Calu3 (cell line): ENCODE measurements at regions of chr1 and their contacts with region 1.

Region 1: DNA sequence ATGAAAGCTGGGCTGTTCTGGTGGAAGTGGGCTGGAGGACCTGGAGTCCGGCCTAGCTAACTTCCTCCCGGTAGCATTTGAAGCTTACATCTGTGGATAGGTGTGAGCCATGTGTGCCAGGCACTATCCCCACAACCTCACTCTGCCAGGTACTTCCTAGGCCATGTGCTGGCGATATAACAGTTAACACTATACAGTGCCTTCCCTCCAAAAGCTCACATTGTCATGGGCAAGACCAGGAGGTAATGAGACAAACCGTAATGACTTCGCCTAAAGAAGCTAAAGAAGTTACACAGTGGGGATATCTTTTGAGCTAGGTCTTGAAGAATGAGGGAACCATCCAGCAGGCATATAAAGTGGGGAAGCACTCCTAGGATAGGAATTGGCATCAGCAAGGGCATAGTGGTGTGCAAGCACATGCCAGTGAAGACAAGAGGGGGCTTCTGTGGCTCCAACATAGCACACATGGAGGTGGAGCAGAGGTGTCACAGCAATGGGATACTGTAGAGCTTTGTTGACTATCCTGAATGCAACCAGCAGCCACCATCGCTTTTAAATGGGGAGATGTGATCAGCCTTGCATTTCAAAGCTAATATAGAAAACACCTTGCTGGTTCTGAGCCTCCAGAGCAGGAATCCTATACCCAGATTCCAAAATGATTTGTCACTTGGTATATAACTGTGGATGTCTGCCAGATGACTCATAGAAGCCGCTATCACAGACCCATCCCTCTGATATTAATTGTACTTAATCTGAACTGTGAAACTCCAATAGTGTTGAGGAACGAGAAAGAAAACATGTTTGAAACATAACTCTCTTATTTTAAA is 466.3 kb downstream of the LMO4 start:
- DNase-seq: peak; percentile 55
- H3K4me3 Mint-ChIP-seq: peak overlapping the region; percentile 38
- H3K27ac Mint-ChIP-seq: peak overlapping the region; percentile 85
- H3K4me1 Mint-ChIP-seq: peaks cover 88% of the 10 kb centered on the region
- H3K27me3 Mint-ChIP-seq: no peaks in the 10 kb centered on the region
- CTCF ChIP-seq: no peak

Region 2: GRCh38 chr1:87328272-87329050 is 466.5 kb before region 1 on chr1 and contains the start of gene LMO4:
- CTCF ChIA-PET with region 1: interaction called, 3 read pairs
- intact Hi-C with region 1: loop called (anchors 5 kb)
- DNase-seq: peak; percentile 95
- H3K4me3 Mint-ChIP-seq: peak within 1 kb of the TSS; percentile 94
- H3K27ac Mint-ChIP-seq: peak within 1 kb of the TSS; percentile 90
- H3K4me1 Mint-ChIP-seq: peaks cover 20% of the 10 kb centered on the region
- H3K27me3 Mint-ChIP-seq: no peaks in the 10 kb centered on the region
- CTCF ChIP-seq: no peak
- total RNA-seq, gene LMO4: 95.0 and 132 TPM in 2 replicates

Region 3: DNA sequence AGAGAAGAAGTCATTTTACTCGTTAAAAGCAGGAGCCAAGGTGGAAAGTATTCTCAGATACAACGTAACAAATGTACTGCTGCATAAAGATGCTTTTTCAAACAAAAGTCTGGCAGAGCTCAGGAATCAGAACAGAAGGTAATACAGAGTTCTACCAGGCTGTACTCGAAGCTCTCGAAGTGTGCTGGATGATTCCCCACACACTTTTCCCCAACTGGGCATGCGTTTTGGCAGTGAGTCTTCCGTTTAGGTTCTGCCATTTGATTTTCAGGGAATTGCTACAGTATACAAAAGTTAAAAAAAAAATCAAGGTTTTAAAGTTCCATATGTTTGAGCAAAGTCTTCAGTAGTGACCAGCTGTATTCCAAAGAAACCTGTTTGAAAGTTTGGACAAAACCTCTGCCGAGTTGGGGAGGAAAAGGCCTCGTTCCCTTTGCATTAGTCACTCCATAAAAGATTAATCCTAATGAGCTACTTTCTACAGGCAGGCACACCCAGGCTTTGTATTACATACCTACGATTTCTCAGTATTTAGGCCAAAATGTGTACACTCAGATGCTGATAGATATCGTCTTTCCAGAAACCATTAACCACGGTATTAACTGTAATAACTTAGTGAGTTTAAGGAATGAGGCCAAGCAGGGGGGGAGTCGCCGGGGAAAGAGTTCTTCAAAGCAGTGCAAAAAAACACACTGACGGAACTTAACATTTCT is 10.8 kb after region 1 on chr1:
- CTCF ChIA-PET with region 1: interaction called, 9 read pairs
- intact Hi-C with region 1: loop called (anchors 1 kb)
- DNase-seq: peak; percentile 66
- H3K4me3 Mint-ChIP-seq: peak overlapping the region; percentile 62
- H3K27ac Mint-ChIP-seq: peak overlapping the region; percentile 92
- H3K4me1 Mint-ChIP-seq: peaks cover 61% of the 10 kb centered on the region
- H3K27me3 Mint-ChIP-seq: no peaks in the 10 kb centered on the region
- CTCF ChIP-seq: no peak

Region 4: DNA sequence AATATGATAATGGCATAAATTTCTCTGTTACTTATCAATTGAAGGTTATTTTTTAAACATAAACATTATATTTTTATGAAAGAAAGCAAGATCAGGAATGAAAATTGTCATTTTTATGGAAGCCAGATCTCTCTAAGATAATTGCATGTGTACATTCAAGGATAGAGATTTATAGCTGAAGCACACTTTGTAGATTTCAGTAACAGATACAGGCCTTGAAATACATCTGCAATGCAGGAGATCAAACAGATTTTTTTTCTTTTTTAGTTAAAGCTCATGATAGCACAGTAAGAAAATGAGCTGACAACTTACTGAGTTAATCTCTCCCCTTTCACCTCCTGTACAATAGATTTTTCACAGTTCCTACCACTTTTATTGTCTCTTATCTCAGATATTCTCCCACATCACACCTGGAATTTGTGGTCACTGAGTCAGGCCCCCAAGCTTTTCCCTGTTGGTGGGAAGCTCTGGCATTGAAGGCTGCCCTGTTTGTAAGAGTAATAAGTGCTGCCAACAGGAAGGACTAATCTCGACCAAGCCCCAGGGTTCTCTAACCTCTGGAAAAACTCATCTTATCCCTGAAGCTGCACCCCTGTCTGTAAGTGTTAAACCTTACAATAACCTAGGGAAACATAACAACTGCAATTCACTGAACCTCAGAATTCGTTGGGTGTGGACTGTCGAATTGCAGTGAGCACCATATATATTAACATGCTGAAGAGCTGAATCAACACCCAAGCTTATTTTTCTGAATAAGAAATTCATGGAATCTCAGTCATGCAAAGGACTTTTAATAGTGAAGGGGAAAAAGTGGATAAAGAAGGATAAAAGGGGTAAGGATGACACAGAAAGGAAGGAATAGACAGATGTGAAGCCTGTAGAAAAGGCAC is 132.6 kb after region 1 on chr1:
- CTCF ChIA-PET with region 1: no interaction called
- intact Hi-C with region 1: loop called (anchors 10 kb)
- DNase-seq: peak; percentile 40
- H3K4me3 Mint-ChIP-seq: peak overlapping the region; percentile 18
- H3K27ac Mint-ChIP-seq: peak overlapping the region; percentile 77
- H3K4me1 Mint-ChIP-seq: peaks cover 33% of the 10 kb centered on the region
- H3K27me3 Mint-ChIP-seq: no peaks in the 10 kb centered on the region
- CTCF ChIP-seq: no peak

Region 5: DNA sequence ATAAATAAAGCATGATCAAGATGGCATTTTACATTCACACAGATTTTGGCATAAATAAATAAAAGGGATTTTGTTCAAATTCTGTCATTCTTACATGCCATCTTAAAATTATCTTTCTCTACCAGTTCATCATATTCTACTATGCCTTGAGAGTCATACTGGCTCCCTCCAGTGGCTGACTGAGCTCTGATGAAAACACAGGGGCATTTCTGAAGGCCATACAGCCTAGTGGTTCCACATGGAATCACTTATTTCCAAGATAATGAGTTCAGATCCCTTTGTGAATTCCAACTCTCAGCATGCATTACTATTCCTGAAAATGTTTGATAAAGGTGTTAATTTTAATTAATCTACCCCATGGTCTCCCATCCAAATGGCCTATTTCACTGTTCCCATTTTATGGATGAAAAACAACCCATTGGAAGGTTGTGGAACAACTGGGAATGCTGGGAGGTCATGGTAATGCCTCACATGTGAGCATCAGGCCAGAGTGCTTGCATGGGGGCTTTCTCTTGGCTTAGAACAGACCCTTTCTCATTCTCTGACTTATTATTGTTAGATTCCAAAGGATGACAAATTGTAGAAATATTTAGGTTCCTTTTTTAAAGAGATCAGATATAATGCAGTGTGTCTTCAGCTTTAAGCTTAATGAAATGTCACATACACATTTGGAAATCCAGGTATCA is 266.6 kb after region 1 on chr1:
- CTCF ChIA-PET with region 1: no interaction called
- intact Hi-C with region 1: loop called (anchors 2 kb)
- DNase-seq: peak; percentile 69
- H3K4me3 Mint-ChIP-seq: no peak overlapping the region
- H3K27ac Mint-ChIP-seq: no peak overlapping the region
- H3K4me1 Mint-ChIP-seq: peaks cover 35% of the 10 kb centered on the region
- H3K27me3 Mint-ChIP-seq: no peaks in the 10 kb centered on the region
- CTCF ChIP-seq: peak; percentile 71